Astrocyte of the cerebellum (primary cell): ENCODE measurements at regions of chr10 and their contacts with region 1.

Region 1: DNA sequence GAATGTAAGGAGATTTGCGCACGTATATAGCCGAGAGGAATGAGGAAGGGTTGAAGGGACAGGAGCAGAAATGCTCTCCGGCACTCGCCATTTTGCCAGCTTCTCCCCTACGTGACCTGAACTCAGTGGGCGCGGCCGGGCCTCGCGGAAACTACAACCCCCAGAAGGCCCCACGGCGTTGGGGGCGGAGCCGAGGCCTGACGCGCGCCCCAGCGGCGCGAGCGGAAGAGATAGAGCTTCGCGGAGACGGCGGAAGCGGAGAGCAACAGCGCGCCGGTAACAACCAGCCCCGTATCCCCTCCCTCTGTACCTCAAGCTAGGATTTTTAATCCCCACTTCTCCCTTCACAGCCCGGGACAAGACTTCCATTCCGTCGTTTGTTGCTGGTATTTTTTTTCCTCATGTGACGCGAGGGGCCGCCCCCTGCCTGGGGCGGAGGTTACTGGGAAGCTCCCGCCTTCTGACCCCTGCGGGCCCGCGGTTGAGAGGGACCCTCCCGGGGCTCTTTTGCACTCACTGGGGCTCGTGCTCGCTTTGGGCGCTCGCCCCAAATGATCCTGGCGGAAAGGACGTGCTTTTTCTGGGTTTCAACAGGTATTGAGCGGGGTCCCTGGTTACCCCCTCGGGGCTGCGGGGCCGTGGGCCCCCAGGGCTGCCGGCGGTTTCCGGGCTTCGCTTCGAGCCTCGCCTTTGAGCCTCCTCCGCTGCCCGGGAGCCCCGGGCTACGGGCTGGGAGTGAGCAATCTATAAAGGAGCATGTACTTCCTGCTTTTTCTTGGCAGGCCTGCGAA is at the start of gene R3HCC1L:
- DNase-seq: peak; percentile 36
- H3K4me3 ChIP-seq: peak within 1 kb of the TSS; percentile 99
- CTCF ChIP-seq: no peak

Region 2: GRCh38 chr10:98170249-98171117 is 35.9 kb after region 1 on chr10:
- in situ Hi-C with region 1: loop called (anchors 5 kb)
- DNase-seq: peak; percentile 28
- H3K4me3 ChIP-seq: no peak overlapping the region
- CTCF ChIP-seq: peak; percentile 80